Heart right ventricle (tissue), 16 donors: ENCODE measurements at regions of chr2 and their contacts with region 1.

Region 1: DNA sequence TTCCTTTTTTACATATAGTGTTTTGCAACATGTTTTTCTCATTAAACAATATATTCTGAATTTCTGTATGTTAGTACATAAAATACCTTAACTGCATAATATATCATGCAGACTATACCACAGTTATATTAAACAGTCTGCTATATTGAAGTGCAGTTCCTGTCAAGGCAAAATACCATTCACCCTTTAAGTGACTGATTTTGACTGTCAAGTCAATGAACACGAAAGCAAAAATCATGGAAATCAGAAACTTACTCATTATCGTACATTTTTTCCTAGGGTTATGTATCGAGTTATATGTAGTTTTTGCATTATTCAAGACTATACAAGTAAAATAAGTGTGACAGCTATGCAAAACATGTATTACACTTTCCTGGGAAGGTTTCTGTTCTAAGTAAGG is 361.6 kb upstream of the MAP2 start:
- DNase-seq: no peak
- ATAC-seq: no peak
- H3K4me3 ChIP-seq: no peak overlapping the region
- H3K27ac ChIP-seq: no peak overlapping the region
- H3K4me1 ChIP-seq: no peaks in the 10 kb centered on the region
- H3K27me3 ChIP-seq: no peaks in the 10 kb centered on the region
- CTCF ChIP-seq: no peak

Region 2: DNA sequence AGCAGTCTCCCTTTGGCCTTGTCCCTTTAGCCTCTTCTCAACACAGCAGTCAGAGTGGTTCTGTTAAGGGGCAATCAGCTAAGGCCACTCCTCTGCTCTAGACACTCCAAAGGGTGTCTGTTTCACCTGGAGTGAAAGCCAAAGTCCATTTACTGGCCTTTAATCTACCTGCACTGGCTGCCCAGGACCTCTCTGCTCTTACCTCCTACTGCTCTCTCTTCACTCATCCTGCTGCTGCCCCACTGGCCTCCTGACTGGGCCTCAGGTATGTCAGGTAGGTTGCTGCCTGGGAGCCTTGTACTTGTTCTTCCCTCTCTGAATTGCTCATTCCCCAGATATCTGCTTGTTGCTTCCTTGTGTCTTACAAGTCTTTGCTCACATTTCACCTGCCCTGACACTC is 728.0 kb before region 1 on chr2:
- intact Hi-C with region 1: no loop called
- DNase-seq: no peak
- ATAC-seq: no peak
- H3K4me3 ChIP-seq: no peak overlapping the region
- H3K27ac ChIP-seq: no peak overlapping the region
- H3K4me1 ChIP-seq: no peaks in the 10 kb centered on the region
- H3K27me3 ChIP-seq: no peaks in the 10 kb centered on the region
- CTCF ChIP-seq: no peak

Region 3: DNA sequence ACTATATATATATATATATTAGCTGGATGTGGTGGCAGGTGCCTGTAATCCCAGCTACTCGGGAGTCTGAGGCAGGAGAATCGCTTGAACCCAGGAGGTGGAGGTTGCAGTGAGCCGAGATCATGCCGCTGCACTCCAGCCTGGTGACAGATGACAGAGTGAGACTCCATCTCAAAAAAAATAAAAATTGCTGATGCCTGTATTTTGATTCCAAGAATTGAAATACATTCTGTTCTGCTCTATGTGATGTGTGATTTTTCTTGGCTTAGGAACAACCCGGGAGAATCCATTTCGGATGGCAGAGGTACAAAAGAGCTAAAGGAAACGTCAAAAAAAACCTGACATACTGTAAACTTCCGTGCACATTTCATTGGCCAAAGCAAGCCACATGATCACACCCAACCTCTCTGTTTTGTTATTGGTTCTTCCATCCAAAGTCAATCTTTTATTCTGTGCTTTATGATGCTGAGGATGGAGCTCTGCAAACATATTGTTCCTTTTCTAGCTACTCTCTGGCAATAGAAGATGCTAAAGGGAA is 116.4 kb before region 1 on chr2:
- intact Hi-C with region 1: no loop called
- DNase-seq: no peak
- ATAC-seq: no peak
- H3K4me3 ChIP-seq: no peak overlapping the region
- H3K27ac ChIP-seq: no peak overlapping the region
- H3K4me1 ChIP-seq: no peaks in the 10 kb centered on the region
- H3K27me3 ChIP-seq: no peaks in the 10 kb centered on the region
- CTCF ChIP-seq: no peak

Region 4: DNA sequence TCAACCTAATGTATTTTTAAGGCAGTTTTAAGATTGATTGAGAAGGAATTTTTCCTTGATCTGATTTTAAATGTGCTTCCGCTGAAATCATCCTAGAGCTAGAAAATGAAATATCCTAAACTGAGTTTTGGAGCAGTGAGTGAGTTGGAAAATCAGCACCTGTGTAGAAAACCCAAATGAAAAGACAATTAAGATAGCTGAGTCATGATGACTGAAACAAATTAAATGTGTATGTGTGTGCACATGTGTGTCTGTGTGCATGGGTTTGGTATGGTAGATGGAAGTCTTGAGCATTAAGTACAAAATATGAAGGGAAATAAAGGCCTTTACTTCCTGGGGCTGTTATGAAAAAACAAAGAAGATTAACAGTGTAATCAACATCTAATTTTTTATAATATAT is 33.0 kb before region 1 on chr2:
- intact Hi-C with region 1: loop called in 1 of 10 experiments (anchors 1 kb)
- DNase-seq: no peak
- ATAC-seq: no peak
- H3K4me3 ChIP-seq: no peak overlapping the region
- H3K27ac ChIP-seq: no peak overlapping the region
- H3K4me1 ChIP-seq: no peaks in the 10 kb centered on the region
- H3K27me3 ChIP-seq: no peaks in the 10 kb centered on the region
- CTCF ChIP-seq: no peak

Region 5: GRCh38 chr2:209138079-209138478 is 75.9 kb after region 1 on chr2:
- intact Hi-C with region 1: no loop called
- DNase-seq: no peak
- ATAC-seq: no peak
- H3K4me3 ChIP-seq: no peak overlapping the region
- H3K27ac ChIP-seq: no peak overlapping the region
- H3K4me1 ChIP-seq: no peaks in the 10 kb centered on the region
- H3K27me3 ChIP-seq: no peaks in the 10 kb centered on the region
- CTCF ChIP-seq: no peak